ENCODE measurements at regions of chr3 and their contacts with region 1.

Region 1: DNA sequence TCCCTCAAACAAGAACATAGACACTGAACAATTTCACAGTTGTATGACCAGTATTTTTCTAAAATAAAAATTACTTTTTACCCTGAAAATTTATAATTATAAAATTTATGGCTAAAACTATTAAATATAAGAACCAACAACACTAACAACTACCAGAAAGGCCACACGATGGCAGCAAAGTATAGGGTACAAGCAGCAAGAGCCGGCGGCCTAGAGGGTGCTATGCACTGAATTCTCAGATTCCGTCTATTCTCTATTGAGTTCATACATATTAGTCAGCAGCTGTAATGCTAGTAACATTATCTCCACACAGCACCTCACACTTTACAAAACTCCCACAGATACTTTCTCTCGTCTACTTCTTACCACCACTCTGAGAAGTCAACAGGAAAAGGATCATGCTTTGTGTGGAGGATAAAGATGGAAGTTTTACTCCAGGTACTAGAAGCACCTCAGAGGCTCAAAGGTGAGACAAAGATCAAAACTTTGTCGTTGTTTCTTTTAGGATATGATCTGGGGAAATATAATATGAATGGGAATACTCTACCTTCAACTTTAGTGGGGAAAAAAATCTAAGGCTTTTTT is 160.5 kb downstream of the FGF12 start:
- DNase-seq: no peak

Region 2: GRCh38 chr3:192772240-192772894 is 205.6 kb after region 1 on chr3:
- intact Hi-C with region 1: loop called (anchors 10 kb)
- DNase-seq: no peak

Region 3: GRCh38 chr3:192802957-192803899 is 236.4 kb after region 1 on chr3:
- intact Hi-C with region 1: loop called (anchors 2 kb)
- DNase-seq: no peak